IMR-90 (cell line): ENCODE measurements at regions of chr19 and their contacts with region 1.

Region 1: GRCh38 chr19:49380391-49380790 is 7.7 kb upstream of the KASH5 start:
- DNase-seq: no peak
- ATAC-seq: no peak
- H3K4me3 ChIP-seq: no peak overlapping the region
- H3K27ac ChIP-seq: no peak overlapping the region
- H3K4me1 ChIP-seq: no peaks in the 10 kb centered on the region
- H3K27me3 ChIP-seq: peaks cover 21% of the 10 kb centered on the region
- CTCF ChIP-seq: no peak
- POLR2A ChIP-seq: no peak
- RAD21 ChIP-seq: no peak

Region 2: GRCh38 chr19:49213791-49214190 is 166.6 kb before region 1 on chr19:
- CTCF ChIA-PET with region 1: no interaction called
- POLR2A ChIA-PET with region 1: no interaction called
- dilution Hi-C with region 1: no loop called
- in situ Hi-C with region 1: no loop called
- intact Hi-C with region 1: no loop called
- DNase-seq: no peak
- ATAC-seq: no peak
- H3K4me3 ChIP-seq: no peak overlapping the region
- H3K27ac ChIP-seq: no peak overlapping the region
- H3K4me1 ChIP-seq: no peaks in the 10 kb centered on the region
- H3K27me3 ChIP-seq: no peaks in the 10 kb centered on the region
- CTCF ChIP-seq: no peak
- POLR2A ChIP-seq: no peak
- RAD21 ChIP-seq: no peak

Region 3: DNA sequence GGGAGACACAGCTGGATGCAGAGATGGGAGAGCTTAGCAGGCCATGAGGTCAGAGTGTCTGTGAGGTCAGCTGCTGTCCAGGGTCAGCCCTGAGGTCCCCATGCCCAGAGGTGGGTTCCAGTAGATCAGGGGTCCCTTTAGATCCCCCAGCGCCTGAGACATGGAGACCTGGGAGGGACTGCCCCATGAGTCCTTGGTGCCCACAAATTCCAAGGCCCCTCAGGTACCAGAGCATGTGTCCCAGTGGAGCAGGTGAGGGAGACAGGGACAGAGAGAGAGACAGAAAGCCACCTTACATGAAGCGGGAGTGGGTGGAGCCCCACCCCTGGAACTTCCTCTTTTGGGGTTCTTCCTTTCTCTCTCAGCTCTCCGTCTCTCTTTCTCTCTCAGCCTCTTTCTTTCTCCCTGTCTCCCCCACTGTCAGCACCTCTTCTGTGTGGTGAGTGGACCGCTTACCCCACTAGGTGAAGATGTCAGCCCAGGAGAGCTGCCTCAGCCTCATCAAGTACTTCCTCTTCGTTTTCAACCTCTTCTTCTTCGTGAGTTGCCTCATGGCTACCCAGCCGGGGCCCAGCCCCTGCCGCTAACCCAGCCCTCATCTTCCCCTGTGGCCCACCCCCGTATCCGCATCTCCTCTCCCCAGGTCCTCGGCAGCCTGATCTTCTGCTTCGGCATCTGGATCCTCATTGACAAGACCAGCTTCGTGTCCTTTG is 45.2 kb before region 1 on chr19 and contains the start of gene CD37:
- CTCF ChIA-PET with region 1: no interaction called
- POLR2A ChIA-PET with region 1: interaction called, 10 read pairs
- dilution Hi-C with region 1: no loop called
- in situ Hi-C with region 1: no loop called
- intact Hi-C with region 1: no loop called
- DNase-seq: no peak
- ATAC-seq: no peak
- H3K4me3 ChIP-seq: no peak within 1 kb of the TSS
- H3K27ac ChIP-seq: no peak within 1 kb of the TSS
- H3K4me1 ChIP-seq: no peaks in the 10 kb centered on the region
- H3K27me3 ChIP-seq: no peaks in the 10 kb centered on the region
- CTCF ChIP-seq: no peak
- POLR2A ChIP-seq: no peak
- RAD21 ChIP-seq: no peak
- total RNA-seq, gene CD37: not detected in 2 replicates

Region 4: GRCh38 chr19:49512970-49513745 is 132.8 kb after region 1 on chr19:
- CTCF ChIA-PET with region 1: no interaction called
- POLR2A ChIA-PET with region 1: no interaction called
- dilution Hi-C with region 1: no loop called
- in situ Hi-C with region 1: no loop called
- intact Hi-C with region 1: no loop called
- DNase-seq: no peak
- ATAC-seq: peak; percentile 84
- H3K4me3 ChIP-seq: peak overlapping the region; percentile 57
- H3K27ac ChIP-seq: no peak overlapping the region; the same call in 1 of the 2 replicates
- H3K4me1 ChIP-seq: peaks cover 5% of the 10 kb centered on the region; the same call in 1 of the 2 replicates
- H3K27me3 ChIP-seq: no peaks in the 10 kb centered on the region
- CTCF ChIP-seq: no peak
- POLR2A ChIP-seq: no peak
- RAD21 ChIP-seq: no peak